ENCODE measurements at regions of chr3 and their contacts with region 1.

Region 1: DNA sequence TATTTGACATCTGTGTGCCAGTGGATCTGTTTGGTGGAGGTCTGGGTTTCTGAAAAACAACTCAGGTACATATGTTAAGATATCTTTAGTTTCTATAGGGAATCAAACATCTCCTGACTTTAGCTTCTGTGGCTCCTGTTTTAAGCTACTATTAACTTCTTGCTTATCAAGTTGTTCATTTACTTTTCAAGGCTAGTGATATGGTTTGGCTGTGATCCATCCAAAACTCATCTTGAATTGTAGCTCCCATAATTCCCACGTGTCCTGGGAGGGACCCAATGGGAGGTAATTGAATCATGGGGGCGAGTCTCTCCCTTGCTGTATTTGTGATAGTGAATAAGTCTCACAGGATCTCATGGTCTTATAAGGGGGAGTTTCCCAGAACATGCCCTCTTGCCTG is 41.4 kb downstream of the ZNF860 start:
- DNase-seq: no peak
- H3K4me3 ChIP-seq: no peak overlapping the region
- H3K27ac ChIP-seq: no peak overlapping the region
- H3K4me1 ChIP-seq: peaks cover 0 to 14% (median 4%) of the 10 kb centered on the region in 4 donors
- H3K27me3 ChIP-seq: no peaks in the 10 kb centered on the region
- CTCF ChIP-seq: no peak
- EP300 ChIP-seq: no peak
- POLR2A ChIP-seq: no peak

Region 2: GRCh38 chr3:31733234-31733667 is 289.7 kb before region 1 on chr3:
- intact Hi-C with region 1: no loop called
- DNase-seq: peak; percentile 40 to 65
- H3K4me3 ChIP-seq: no peak overlapping the region
- H3K27ac ChIP-seq: no peak overlapping the region
- H3K4me1 ChIP-seq: peaks cover 0 to 9% (median 6%) of the 10 kb centered on the region in 4 donors
- H3K27me3 ChIP-seq: no peaks in the 10 kb centered on the region
- CTCF ChIP-seq: no peak
- EP300 ChIP-seq: no peak
- POLR2A ChIP-seq: no peak

Region 3: DNA sequence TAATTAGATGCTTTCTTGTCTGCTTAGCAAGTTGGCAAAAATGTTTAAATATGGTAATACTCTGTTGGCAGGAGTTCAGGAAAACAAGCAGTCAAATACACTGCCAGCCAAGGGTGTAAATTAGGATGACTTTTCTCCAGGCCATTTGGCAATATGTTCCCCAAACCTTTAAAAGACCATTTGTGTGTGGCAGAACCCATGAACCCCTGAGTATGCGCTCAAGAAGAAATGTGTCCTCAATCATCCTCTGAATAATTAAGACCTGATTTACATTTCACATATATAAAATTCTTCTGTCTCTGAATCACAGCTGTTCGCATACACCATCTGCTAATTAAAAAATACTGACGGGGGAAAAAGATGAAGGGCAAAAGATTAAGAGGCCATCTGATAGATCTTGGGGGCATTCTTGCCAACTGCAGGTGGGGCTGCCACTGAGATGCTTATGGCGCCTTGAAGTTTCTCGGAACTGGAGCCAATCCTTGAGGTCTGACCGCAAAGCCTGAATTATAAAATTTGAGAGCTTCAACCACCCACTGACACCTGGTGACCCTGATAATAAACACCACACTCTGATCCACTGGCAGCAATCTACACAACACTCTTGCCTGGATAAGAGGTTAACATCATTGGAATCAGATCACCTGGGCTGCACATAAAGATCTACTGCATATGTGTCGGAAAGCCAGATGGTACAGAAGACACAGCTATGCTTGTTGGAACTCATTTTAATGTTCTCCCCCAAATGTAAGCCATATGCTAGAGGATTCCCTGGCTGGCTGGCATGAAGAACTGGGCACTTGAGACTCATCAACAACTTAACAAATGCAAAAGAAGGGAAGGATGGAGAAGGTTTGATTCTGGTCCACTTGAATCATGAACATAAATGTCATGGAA is 232.5 kb before region 1 on chr3:
- intact Hi-C with region 1: no loop called
- DNase-seq: no peak
- H3K4me3 ChIP-seq: no peak overlapping the region
- H3K27ac ChIP-seq: no peak overlapping the region
- H3K4me1 ChIP-seq: peaks cover 0 to 5% (median 0%) of the 10 kb centered on the region in 4 donors
- H3K27me3 ChIP-seq: no peaks in the 10 kb centered on the region
- CTCF ChIP-seq: no peak
- EP300 ChIP-seq: no peak
- POLR2A ChIP-seq: no peak

Region 4: DNA sequence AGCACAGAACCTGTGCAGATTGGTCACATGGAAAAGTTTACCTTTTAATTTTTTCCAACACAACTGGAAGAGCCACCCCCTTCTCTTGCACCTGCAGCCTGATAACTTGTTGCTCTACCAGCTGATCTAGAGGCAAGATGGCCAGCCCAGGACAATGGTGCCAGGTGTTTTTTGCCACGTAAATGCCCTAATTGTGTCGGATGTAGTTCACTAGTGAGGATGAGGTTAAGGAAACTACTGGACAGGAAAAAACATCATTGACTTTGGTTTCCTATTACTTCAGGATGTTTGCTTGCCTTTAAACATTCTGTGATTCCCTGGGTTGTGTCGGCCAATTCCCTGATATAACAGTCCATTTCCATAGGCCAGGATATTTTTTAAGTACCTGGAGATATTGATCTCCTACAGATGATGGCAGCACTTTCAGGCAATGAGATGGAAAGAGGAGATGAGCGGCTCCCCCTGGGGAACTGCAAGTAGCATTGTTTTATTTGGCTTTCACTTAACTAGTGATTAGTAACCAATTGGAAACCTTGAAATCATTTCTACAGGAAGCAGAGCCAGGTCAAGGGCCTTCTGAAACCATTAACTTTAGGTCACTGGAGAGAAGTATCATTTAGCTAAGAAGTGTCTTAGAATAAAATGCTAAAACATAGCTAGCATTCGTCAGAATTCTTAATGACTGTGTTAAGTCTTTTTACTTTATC is 114.4 kb before region 1 on chr3:
- intact Hi-C with region 1: no loop called
- DNase-seq: no peak
- H3K4me3 ChIP-seq: no peak overlapping the region
- H3K27ac ChIP-seq: no peak overlapping the region
- H3K4me1 ChIP-seq: peaks cover 0 to 19% (median 12%) of the 10 kb centered on the region in 4 donors
- H3K27me3 ChIP-seq: no peaks in the 10 kb centered on the region
- CTCF ChIP-seq: no peak
- EP300 ChIP-seq: no peak
- POLR2A ChIP-seq: no peak

Region 5: DNA sequence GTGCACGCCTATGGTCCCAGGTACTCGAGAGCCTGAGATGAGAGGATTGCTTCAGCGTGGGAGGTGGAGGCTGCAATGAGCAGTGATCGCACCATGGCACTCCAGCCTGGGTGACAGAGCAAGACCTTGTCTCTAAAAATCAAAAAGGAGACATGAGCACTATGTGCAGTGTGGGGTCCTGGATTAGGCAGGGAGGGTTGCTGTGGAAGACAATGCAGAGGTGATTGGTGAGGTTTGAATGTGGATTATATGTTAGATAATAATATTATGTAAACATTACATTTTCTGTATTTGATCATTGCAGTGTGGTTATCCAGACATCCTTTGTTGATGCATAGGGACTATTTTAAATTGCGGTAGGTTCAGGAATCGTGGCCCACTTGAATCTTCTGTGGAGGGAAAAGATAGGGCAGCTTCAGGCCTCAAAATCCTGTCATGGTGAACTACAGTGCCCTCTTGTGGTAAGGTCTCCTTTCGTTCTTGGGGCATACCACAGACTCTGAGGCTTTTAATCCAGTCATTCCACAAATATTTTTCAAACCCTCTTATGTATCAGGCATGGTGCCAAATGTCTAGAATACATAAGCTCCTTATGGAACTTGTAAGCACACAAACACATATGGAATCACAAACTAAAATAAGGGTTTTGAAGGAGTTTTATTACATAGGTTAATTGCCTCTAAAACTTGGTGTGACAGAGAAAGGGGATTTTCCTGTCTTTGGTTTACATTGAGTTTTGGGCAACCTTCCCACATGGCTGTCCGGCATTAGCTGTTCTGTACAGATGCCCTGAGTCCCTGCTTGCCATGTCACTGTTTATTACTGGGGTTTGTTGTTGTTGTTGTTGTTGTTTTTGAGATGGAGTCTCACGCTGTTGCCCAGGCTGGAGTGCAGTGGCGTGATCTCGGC is 121.2 kb after region 1 on chr3:
- intact Hi-C with region 1: loop called (anchors 5 kb)
- DNase-seq: peak; percentile 40 to 91
- H3K4me3 ChIP-seq: no peak overlapping the region
- H3K27ac ChIP-seq: no peak overlapping the region
- H3K4me1 ChIP-seq: peaks cover 0 to 10% (median 5%) of the 10 kb centered on the region in 4 donors
- H3K27me3 ChIP-seq: no peaks in the 10 kb centered on the region
- CTCF ChIP-seq: peak in 5 of 7 experiments; percentile 50 to 86 (median 60)
- EP300 ChIP-seq: no peak
- POLR2A ChIP-seq: no peak

Measured in stomach (tissue), 19 donors.